Naive thymus-derived CD4-positive, alpha-beta T cell (primary cell): ENCODE measurements at regions of chr3 and their contacts with region 1.

Region 1: GRCh38 chr3:157606011-157606851 is 103.0 kb upstream of the VEPH1 start:
- DNase-seq: peak; percentile 15 to 59 (median 44)
- ATAC-seq: peak; percentile 76
- H3K4me3 ChIP-seq: no peak overlapping the region
- H3K4me3 Mint-ChIP-seq: peak overlapping the region in 4 of 10 donors; percentile 20 to 72 (median 62)
- H3K27ac ChIP-seq: no peak overlapping the region
- H3K27ac Mint-ChIP-seq: peak overlapping the region in 1 of 9 donors; percentile 20
- H3K4me1 ChIP-seq: no peaks in the 10 kb centered on the region
- H3K4me1 Mint-ChIP-seq: peaks cover 0 to 15% (median 5%) of the 10 kb centered on the region in 7 donors
- H3K27me3 ChIP-seq: no peaks in the 10 kb centered on the region
- H3K27me3 Mint-ChIP-seq: peaks cover 9 to 28% (median 13%) of the 10 kb centered on the region in 5 donors

Region 2: GRCh38 chr3:157551961-157552360 is 54.3 kb before region 1 on chr3:
- CTCF ChIA-PET with region 1: no interaction called
- POLR2A ChIA-PET with region 1: no interaction called
- intact Hi-C with region 1: no loop called
- DNase-seq: no peak
- ATAC-seq: no peak
- H3K4me3 ChIP-seq: no peak overlapping the region
- H3K4me3 Mint-ChIP-seq: no peak overlapping the region
- H3K27ac ChIP-seq: no peak overlapping the region
- H3K27ac Mint-ChIP-seq: no peak overlapping the region
- H3K4me1 ChIP-seq: no peaks in the 10 kb centered on the region
- H3K4me1 Mint-ChIP-seq: no peaks in the 10 kb centered on the region
- H3K27me3 ChIP-seq: no peaks in the 10 kb centered on the region
- H3K27me3 Mint-ChIP-seq: peaks cover 11 to 44% (median 33%) of the 10 kb centered on the region in 5 donors

Region 3: GRCh38 chr3:157590273-157590672 is 16.0 kb before region 1 on chr3:
- CTCF ChIA-PET with region 1: no interaction called
- POLR2A ChIA-PET with region 1: no interaction called
- intact Hi-C with region 1: no loop called
- DNase-seq: no peak
- ATAC-seq: no peak
- H3K4me3 ChIP-seq: no peak overlapping the region
- H3K4me3 Mint-ChIP-seq: no peak overlapping the region
- H3K27ac ChIP-seq: no peak overlapping the region
- H3K27ac Mint-ChIP-seq: no peak overlapping the region
- H3K4me1 ChIP-seq: no peaks in the 10 kb centered on the region
- H3K4me1 Mint-ChIP-seq: no peaks in the 10 kb centered on the region
- H3K27me3 ChIP-seq: no peaks in the 10 kb centered on the region
- H3K27me3 Mint-ChIP-seq: peaks cover 5 to 20% (median 13%) of the 10 kb centered on the region in 5 donors

Region 4: DNA sequence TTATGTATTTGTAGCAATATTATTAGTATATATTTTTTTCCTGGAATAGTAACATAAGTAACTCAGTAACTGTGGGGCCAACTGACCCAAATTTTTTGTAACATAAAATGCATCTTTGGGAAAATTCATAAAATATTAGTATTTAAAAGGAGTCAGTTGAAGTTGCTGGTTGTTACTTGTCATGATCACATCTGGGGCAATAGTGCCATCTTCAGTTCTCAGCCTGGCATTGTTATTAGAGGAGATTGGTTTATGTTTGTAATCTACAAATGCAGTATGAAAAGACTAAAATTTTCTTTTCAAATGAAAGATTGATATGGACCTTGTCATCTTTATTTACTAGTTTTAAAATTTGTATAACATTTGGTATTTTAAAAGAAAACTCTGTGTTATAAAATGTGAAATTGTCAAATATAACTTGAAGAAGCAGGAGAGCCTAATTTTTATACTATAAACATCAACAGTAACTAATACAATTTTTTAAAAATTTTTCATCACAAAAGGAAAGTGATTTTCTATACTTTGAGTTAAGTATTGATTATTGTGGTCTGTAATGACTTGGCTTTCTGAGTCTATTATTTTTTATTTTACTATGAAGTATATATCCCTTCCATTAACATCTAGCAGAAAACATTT is 926.0 kb after region 1 on chr3:
- CTCF ChIA-PET with region 1: no interaction called
- POLR2A ChIA-PET with region 1: no interaction called
- intact Hi-C with region 1: loop called in 1 of 2 experiments (anchors 1 kb)
- DNase-seq: peak in 2 of 9 donors; percentile 2 to 10
- ATAC-seq: no peak
- H3K4me3 ChIP-seq: no peak overlapping the region
- H3K4me3 Mint-ChIP-seq: no peak overlapping the region
- H3K27ac ChIP-seq: no peak overlapping the region
- H3K27ac Mint-ChIP-seq: no peak overlapping the region
- H3K4me1 ChIP-seq: no peaks in the 10 kb centered on the region
- H3K4me1 Mint-ChIP-seq: no peaks in the 10 kb centered on the region
- H3K27me3 ChIP-seq: no peaks in the 10 kb centered on the region
- H3K27me3 Mint-ChIP-seq: no peaks in the 10 kb centered on the region